Left ventricle myocardium superior (tissue), 1 donor: ENCODE measurements at regions of chr2 and their contacts with region 1.

Region 1: GRCh38 chr2:27095745-27096651 is 9.4 kb downstream of the KHK start:
- DNase-seq: peak; percentile 70
- ATAC-seq: peak; percentile 87

Region 2: DNA sequence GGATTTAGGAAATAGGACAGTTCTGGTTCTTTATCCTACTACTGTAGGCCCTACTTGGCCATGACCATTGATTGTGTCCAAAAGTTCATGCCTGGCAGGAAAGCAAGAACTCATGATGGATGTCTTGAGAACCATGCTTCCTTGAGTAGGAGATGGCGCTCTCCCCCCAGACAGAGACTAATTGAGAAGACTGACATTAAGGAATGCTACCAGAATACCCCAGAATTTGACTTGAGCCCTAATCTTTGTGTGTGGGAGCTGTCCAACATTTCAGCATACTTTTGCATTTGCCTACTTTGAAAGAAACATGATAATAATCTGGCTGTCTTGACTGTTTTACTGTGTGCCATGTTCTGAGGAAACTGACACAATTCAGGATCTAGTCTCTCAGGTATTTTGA is 102.2 kb before region 1 on chr2:
- intact Hi-C with region 1: no loop called
- DNase-seq: no peak
- ATAC-seq: no peak

Region 3: DNA sequence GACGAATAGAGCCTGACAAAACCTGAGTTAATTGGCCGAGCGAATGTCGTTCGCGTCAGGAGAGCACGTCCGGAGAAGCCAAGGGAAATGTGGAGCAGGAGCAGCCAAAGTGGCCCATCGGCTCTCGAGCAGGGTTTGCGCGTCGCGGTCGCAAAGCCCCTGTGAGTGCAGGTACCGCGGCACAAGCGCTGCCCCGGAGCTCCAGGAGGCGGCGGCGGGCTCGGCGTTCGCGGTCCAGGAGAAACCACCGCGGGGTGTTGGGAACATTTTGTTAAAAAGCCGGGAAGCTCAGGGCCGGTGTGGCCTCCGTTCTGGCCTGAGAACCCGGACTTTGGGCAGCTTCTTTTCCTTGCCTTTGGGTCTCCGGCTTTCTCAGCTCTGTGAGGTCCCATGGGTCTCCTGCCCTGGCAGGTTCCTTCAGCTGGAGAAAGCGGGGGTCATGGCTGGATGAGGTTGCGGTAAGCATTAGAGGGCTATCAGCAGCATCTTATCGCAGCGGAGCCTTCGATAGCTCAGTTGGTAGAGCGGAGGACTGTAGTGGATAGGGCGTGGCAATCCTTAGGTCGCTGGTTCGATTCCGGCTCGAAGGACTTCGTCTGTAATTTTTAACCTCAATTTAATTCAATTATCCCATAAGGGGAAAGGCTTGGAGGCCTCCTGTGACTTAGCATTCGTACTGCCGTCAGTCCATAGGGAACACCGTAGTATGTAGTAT is 45.6 kb before region 1 on chr2:
- intact Hi-C with region 1: no loop called
- DNase-seq: peak; percentile 87
- ATAC-seq: peak; percentile 82

Region 4: GRCh38 chr2:27185331-27186026 is 89.5 kb after region 1 on chr2:
- intact Hi-C with region 1: loop called (anchors 10 kb)
- DNase-seq: no peak
- ATAC-seq: peak; percentile 83

Region 5: DNA sequence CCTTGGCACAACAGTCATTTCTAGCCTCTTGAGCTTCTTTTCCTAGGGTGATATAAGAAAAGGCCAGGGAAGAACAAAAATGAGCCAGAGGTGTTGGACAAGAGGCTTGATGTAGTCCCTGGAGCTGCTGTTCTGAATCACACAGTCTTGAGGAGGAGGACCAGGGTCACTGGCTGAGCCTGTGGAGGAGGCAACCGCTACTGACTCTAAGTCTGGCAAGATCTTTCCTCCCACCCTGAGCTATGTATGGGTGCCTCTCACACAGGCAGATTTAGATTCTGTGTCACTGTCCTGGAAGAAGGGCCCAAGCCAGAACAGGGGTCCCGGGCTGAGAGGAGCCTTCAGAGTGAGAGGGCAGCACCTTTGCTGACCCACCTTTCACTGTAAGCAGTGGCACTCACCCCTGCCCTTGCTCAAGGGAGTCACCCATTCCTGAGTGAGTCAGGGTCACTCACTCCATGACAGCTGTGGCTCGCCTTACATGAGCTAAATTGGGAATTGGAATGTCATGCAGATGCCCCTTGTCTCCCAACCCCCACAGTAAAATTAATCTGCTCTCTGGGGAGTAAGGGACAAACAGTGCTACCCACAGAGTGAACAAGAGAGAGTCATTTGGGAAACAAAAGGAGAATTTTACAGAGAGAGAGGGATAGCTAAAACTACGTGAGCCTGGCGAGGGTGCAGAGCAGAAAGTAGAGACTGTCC is 186.0 kb after region 1 on chr2 and contains the start of gene TRIM54:
- intact Hi-C with region 1: loop called (anchors 10 kb)
- DNase-seq: peak; percentile 59
- ATAC-seq: peak; percentile 87
- total RNA-seq, gene TRIM54: 291 TPM